ENCODE measurements at regions of chr16 and their contacts with region 1.

Region 1: DNA sequence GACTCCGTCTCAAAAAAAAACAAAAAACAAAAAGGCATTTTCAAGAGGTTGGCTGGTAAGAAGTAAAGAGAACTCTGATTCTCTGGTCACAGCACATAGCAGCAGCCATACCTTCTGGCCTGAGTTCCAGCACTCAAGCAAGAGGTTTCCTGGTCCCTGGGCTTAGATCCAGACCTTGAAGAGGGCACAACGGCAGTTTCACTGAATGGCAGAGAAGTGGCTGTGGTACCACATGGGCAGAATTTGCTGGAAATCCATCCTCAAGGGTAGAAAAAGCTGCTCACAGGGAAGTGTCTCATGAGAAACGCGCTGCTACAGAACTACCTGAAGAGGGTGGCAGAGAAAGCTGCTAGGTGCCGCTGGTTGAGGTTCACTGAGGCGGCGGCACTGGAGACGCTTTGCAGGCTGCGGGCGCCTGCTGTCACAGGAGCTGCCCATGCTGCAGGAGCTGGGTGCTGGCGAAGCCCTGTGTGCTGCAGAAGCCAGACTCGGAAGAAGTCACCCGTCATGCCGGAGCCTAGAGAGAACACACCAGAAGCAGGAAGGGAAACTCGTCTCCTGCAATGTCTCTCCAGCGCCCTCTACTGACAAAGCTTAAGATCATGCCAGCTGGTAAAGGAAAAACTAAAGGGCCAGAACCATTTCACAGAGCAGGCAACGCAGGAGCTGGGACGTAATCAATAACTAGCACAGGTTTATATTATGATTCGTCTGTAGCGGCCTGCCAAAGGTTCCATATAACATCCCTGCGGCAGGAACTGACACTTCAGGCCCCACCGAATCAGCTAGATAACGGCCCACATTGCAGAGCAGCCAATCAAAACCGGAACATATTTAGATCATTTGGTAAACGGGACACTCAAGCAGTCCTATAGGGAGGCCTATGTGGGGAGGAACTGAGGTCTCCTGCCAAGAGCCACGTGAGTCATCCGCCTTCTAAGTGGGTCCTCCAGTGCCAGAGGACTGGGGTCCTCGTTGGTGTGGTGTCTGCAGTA is 5.4 kb upstream of the ZNF213 start:
- DNase-seq: peak; percentile 87 to 93 (median 90)
- H3K4me3 ChIP-seq: peak overlapping the region; percentile 61 to 85 (median 69)
- H3K27ac ChIP-seq: peak overlapping the region in 1 of 2 experiments; percentile 64
- H3K4me1 ChIP-seq: peaks cover 4 to 36% (median 28%) of the 10 kb centered on the region in 4 experiments
- H3K27me3 ChIP-seq: no peaks in the 10 kb centered on the region

Region 2: DNA sequence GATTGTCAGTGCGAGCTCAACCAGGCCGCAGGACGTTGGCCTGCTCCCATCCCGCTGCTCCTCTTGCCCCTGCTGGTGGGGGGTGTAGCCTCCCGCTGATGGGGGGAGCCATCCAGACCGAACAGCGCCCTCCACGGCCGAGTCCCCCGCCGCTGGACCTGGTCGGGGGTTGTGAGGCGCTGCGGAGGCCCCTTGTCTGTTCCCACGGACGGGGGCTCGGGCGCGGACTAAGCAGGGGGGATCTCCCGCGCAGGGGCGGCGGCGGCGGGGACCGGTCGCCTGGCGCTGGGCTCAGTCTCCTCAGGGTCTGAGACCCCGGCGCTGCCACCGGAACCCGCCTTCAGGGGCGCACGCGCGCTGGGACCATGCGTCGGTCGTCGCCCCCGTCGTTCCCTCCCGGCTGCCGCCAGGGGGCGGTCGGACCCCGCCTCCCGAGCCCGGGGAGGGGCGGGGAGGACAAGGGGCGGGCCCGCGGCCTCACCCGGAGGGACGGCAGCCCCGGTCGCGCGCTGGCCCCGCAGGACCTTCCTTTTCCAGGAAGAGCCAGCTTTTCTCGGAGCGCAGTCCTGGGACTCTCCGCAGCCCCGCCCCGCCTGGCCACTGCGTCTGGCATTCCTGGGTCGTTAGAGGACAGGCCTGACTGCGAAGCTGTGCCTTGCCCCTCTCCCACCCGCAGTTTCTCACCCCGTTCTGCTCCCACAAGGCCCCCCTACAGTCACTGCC is 70.3 kb before region 1 on chr16:
- CTCF ChIA-PET with region 1: interaction called, 82 read pairs
- POLR2A ChIA-PET with region 1: no interaction called
- DNase-seq: peak; percentile 75 to 83 (median 78)
- H3K4me3 ChIP-seq: peak overlapping the region; percentile 64 to 90 (median 76)
- H3K27ac ChIP-seq: peak overlapping the region in 1 of 2 experiments; percentile 61
- H3K4me1 ChIP-seq: peaks cover 0 to 57% (median 48%) of the 10 kb centered on the region in 4 experiments
- H3K27me3 ChIP-seq: peaks cover 0 to 6% (median 0%) of the 10 kb centered on the region in 5 experiments

Region 3: DNA sequence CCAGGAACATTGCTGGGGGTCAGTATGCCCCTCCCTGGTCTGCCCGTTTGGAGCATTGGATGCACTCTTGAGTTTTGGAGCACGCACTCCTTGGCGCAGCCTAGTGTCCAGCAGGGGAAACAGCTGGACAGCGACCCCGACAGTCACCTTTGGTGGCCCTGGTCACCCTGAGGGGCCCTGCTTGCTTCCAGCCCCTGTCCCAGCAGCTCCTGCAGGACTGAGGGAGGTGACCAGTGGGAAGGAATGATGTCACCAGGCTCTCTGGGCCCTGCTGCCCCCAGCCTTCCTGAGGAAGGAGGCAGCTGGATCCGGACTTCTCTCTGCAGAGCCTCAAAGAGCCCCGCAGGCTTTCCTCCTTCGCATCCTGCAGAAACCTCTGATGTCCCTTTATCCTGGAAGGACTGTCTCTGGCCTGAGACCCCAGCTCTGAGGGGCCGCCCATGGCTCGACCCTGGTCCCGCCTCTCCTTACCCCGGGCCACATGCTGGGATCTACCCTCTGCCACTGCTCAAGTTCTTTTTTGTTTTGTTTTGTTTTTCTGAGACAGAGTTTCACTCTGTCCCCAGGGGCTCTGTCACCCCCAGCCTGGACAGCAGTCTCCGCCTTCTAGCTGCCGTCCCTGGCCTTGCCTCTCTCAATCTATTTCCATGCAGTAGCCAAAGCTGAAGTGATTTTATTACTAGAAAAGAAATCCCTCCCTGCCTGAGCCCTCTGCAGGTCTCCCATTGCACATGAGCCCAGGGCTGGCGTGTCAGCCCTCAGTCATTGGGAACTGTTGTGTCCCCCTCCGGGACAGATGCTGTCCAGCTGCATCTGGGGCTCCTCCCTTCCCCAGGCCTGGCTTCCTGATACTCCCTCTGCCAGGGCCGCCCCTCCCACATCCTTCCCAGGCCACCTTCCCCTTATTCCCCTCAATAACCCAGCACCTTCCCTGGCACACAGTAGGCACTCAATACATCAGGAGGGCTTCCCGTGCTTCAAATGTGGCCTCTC is 41.9 kb before region 1 on chr16:
- CTCF ChIA-PET with region 1: interaction called, 15 read pairs
- POLR2A ChIA-PET with region 1: interaction called, 3 read pairs
- DNase-seq: peak in 2 of 3 donors; percentile 26 to 47
- H3K4me3 ChIP-seq: peak overlapping the region in 5 of 7 experiments; percentile 25 to 62 (median 47)
- H3K27ac ChIP-seq: no peak overlapping the region
- H3K4me1 ChIP-seq: peaks cover 9 to 62% (median 41%) of the 10 kb centered on the region in 4 experiments
- H3K27me3 ChIP-seq: no peaks in the 10 kb centered on the region

Region 4: DNA sequence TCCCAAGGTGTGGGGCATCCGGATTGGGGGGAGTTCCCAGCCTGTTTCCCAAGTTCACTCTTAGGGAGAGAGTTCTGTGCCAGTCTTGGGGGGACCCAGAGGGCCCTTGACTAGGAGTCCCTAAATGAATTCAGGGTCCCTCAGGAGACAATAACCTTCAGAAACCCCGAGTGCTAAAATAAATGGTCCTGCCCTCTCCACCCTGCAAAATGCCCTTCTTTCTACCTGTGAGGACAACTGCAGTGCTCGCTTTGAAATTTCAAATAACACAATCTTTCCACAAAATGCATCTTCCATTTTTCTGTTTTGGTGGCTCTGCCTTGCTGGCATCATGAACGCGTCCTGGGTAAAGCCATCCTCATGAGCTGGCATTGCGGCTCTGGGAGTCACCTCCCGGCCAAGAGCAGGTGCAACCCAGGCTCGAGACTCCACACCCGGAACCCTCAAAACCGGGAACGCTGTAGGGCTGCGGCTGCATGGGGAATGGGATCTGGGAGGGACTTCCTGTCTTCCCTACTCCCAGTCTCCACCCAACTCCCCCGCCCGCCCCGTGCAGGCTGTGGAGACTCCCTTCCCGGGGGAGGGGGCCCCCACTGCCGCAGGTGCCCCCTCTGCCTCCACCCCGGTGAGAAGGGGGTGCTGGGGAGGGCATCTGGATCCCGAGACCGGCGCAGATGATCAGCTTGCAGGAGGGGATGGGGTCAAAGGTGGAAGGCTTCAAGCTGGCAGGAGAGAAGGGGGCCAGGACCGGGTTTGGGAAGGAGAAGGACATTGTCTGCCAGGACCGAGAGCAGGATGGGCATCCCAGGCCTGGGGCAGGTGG is 17.2 kb before region 1 on chr16 and contains the start of gene ZNF205:
- CTCF ChIA-PET with region 1: interaction called, 31 read pairs
- POLR2A ChIA-PET with region 1: no interaction called
- DNase-seq: no peak
- H3K4me3 ChIP-seq: peak within 1 kb of the TSS in 6 of 7 experiments; percentile 17 to 69 (median 32)
- H3K27ac ChIP-seq: peak within 1 kb of the TSS in 1 of 2 experiments; percentile 70
- H3K4me1 ChIP-seq: peaks cover 3 to 19% (median 9%) of the 10 kb centered on the region in 4 experiments
- H3K27me3 ChIP-seq: peaks cover 0 to 2% (median 0%) of the 10 kb centered on the region in 5 experiments

Region 5: DNA sequence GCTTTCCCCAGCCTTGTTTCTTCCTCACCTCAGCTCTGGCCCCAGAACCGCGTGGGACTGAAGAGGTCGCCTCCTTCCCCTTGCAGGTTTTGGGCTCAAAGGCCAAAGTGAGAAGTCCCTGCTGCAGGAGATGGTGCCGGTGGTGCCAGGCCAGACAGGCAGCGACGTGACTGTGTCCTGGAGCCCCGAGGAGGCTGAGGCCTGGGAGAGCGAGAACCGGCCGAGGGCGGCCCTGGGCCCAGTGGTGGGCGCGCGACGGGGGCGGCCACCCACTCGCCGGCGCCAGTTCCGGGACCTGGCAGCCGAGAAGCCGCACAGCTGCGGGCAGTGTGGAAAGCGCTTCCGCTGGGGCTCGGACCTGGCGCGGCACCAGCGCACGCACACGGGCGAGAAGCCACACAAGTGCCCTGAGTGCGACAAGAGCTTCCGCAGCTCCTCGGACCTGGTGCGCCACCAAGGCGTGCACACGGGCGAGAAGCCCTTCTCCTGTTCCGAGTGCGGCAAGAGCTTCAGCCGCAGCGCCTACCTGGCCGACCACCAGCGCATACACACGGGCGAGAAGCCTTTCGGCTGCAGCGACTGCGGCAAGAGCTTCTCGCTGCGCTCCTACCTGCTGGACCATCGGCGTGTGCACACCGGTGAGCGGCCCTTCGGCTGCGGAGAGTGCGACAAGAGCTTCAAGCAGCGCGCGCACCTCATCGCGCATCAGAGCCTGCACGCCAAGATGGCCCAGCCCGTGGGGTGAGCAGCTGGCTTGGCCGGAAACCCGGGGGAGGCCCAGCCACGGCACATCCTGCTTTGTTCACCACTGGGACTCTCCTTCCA is 11.4 kb after region 1 on chr16:
- CTCF ChIA-PET with region 1: interaction called, 121 read pairs
- POLR2A ChIA-PET with region 1: no interaction called
- DNase-seq: no peak
- H3K4me3 ChIP-seq: no peak overlapping the region
- H3K27ac ChIP-seq: no peak overlapping the region
- H3K4me1 ChIP-seq: peaks cover 0 to 5% (median 4%) of the 10 kb centered on the region in 4 experiments
- H3K27me3 ChIP-seq: no peaks in the 10 kb centered on the region

Region 6: GRCh38 chr16:3311496-3311895 is 182.1 kb after region 1 on chr16:
- CTCF ChIA-PET with region 1: no interaction called
- POLR2A ChIA-PET with region 1: no interaction called
- DNase-seq: no peak
- H3K4me3 ChIP-seq: no peak overlapping the region
- H3K27ac ChIP-seq: no peak overlapping the region
- H3K4me1 ChIP-seq: no peaks in the 10 kb centered on the region
- H3K27me3 ChIP-seq: no peaks in the 10 kb centered on the region

Region 7: GRCh38 chr16:3457434-3458252 is 328.2 kb after region 1 on chr16:
- CTCF ChIA-PET with region 1: interaction called, 10 read pairs
- POLR2A ChIA-PET with region 1: interaction called, 3 read pairs
- DNase-seq: peak; percentile 94 to 96 (median 96)
- H3K4me3 ChIP-seq: peak overlapping the region; percentile 66 to 97 (median 85)
- H3K27ac ChIP-seq: peak overlapping the region; percentile 77 to 92
- H3K4me1 ChIP-seq: peaks cover 19 to 55% (median 52%) of the 10 kb centered on the region in 4 experiments
- H3K27me3 ChIP-seq: no peaks in the 10 kb centered on the region